A673 (cell line): ENCODE measurements at regions of chr14 and their contacts with region 1.

Region 1: GRCh38 chr14:33564774-33565630 is 385.9 kb downstream of the EGLN3 start:
- DNase-seq: peak; percentile 89
- H3K4me3 ChIP-seq: no peak overlapping the region
- H3K27ac ChIP-seq: no peak overlapping the region
- H3K4me1 ChIP-seq: peaks cover 59% of the 10 kb centered on the region
- H3K27me3 ChIP-seq: no peaks in the 10 kb centered on the region
- CTCF ChIP-seq: no peak

Region 2: DNA sequence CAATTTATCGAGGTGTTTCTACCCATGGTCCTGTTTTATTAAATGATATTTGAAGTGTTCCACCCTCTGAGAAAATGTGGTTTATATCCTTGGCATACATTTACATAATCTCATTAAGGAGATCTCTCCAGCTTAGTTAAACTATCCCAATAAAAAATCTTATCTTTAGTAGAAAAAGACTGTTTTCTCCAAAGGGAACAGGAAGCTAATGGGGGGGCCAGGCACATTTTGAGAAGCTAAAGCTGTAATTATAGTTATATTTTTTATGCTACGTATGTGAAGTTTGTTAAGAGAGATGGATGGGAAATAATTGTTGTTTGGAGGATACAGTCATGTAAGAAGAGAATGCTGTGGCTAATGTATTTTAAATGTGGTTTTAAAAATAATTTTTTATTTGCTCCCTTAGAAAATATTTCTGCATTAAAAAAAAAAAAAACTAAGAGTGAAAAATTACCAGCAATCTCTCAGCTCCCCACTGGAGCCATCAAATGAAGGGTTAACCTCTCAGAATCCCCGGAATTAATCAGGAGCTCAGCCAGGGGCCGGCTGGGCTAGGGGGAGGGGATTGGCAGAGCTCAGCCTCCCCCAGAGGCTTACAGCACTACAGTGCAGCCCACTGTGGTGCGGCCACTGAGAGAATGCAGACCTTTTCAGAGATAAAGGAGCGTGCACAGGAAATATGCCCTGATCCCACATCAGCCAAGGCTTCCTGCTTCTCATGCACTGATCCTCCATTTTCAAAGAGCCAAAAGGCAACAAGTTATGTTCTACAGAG is 200.1 kb after region 1 on chr14:
- CTCF ChIA-PET with region 1: no interaction called
- POLR2A ChIA-PET with region 1: no interaction called
- intact Hi-C with region 1: loop called (anchors 10 kb)
- DNase-seq: peak; percentile 97
- H3K4me3 ChIP-seq: peak overlapping the region; percentile 6
- H3K27ac ChIP-seq: peak overlapping the region; percentile 75
- H3K4me1 ChIP-seq: peaks cover 78% of the 10 kb centered on the region
- H3K27me3 ChIP-seq: no peaks in the 10 kb centered on the region
- CTCF ChIP-seq: no peak

Region 3: DNA sequence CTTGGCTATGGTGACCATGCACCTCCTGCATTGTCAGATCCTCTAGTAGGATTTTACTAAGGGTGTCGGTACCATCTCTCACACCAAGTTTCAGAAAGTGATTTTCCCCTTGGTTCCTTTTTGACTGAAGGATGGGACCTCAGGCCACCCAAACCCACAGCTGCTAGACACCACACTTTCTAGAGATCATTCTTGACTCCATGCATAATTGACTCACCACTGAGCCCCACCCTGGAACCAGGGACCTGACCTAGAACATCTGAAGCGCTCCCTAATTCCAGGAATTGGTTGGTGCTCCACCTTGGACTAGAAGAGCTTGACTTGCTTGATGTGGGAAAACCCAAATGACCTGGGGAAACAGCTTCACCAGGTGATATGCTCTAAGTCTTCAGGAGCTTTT is 592.6 kb after region 1 on chr14:
- CTCF ChIA-PET with region 1: no interaction called
- POLR2A ChIA-PET with region 1: no interaction called
- intact Hi-C with region 1: no loop called
- DNase-seq: no peak
- H3K4me3 ChIP-seq: no peak overlapping the region
- H3K27ac ChIP-seq: no peak overlapping the region
- H3K4me1 ChIP-seq: no peaks in the 10 kb centered on the region
- H3K27me3 ChIP-seq: no peaks in the 10 kb centered on the region
- CTCF ChIP-seq: no peak